Esophagus muscularis mucosa (tissue), 4 donors: ENCODE measurements at regions of chr1 and their contacts with region 1.

Region 1: GRCh38 chr1:182279724-182280503 is 111.7 kb downstream of the GLUL start:
- DNase-seq: no peak
- H3K4me3 ChIP-seq: no peak overlapping the region
- H3K27ac ChIP-seq: no peak overlapping the region
- H3K4me1 ChIP-seq: peaks cover 0 to 5% (median 0%) of the 10 kb centered on the region in 4 donors
- H3K27me3 ChIP-seq: no peaks in the 10 kb centered on the region
- CTCF ChIP-seq: no peak
- EP300 ChIP-seq: no peak
- POLR2A ChIP-seq: no peak

Region 2: GRCh38 chr1:182170891-182171461 is 108.9 kb before region 1 on chr1:
- intact Hi-C with region 1: no loop called
- DNase-seq: no peak
- H3K4me3 ChIP-seq: no peak overlapping the region
- H3K27ac ChIP-seq: peak overlapping the region in 3 of 4 donors; percentile 20 to 26 (median 24)
- H3K4me1 ChIP-seq: peaks cover 25 to 57% (median 46%) of the 10 kb centered on the region in 4 donors
- H3K27me3 ChIP-seq: no peaks in the 10 kb centered on the region
- CTCF ChIP-seq: no peak
- EP300 ChIP-seq: no peak
- POLR2A ChIP-seq: no peak

Region 3: DNA sequence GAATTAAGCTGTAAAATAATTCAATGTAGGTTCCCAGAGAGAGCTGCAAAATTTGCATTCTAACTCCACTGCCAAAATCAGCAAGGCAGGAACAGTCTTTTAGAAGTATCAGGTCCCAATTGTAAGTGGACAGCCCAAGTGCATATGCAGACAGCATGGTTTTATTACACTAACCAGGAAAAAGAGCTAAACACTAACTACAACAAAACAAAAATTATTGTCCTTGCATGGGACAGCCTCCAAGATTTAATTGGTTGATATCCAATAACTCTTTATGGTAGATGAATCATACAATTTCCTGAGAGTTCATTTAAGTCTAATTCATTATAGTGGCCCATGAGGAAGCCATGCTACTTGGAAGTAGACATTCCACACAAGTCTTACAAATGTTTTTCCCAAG is 64.2 kb before region 1 on chr1:
- intact Hi-C with region 1: loop called (anchors 5 kb)
- DNase-seq: no peak
- H3K4me3 ChIP-seq: no peak overlapping the region
- H3K27ac ChIP-seq: no peak overlapping the region
- H3K4me1 ChIP-seq: peaks cover 0 to under 1% (median 0%) of the 10 kb centered on the region in 4 donors
- H3K27me3 ChIP-seq: no peaks in the 10 kb centered on the region
- CTCF ChIP-seq: no peak
- EP300 ChIP-seq: no peak
- POLR2A ChIP-seq: no peak

Region 4: DNA sequence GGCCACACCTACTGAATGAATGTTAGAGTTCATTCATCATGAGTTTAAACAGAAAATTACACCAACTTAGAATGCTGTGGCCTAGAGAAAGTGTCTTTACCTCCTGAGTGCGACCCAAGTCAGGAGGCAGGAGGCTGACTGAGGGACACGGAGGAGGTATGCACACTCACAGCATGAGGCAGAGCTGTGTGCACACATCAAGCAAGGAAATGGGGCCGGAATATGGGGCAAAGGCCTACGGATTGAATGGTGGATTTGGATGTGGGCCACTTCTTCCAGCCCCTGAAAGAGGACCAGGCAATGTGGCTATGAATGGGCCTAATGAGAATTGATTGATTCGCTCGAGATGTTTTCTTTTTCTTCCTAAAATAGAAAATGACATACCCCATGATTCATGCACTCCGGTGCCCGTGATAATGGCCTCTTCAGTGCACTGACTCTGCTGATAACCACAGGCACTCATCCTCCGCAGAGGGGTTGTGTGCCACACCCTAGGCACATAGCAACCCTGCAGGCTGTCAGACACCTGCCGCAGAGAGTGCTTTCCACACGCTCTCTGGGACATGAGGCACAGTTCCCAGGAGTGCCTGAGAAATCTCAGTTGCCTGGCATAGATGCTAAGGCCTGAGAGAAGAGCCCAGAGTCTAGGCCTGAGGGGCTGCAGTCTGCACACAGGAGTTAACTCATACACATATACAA is 43.8 kb before region 1 on chr1:
- intact Hi-C with region 1: no loop called
- DNase-seq: no peak
- H3K4me3 ChIP-seq: no peak overlapping the region
- H3K27ac ChIP-seq: no peak overlapping the region
- H3K4me1 ChIP-seq: peaks cover 0 to 9% (median 3%) of the 10 kb centered on the region in 4 donors
- H3K27me3 ChIP-seq: no peaks in the 10 kb centered on the region
- CTCF ChIP-seq: no peak
- EP300 ChIP-seq: no peak
- POLR2A ChIP-seq: no peak